OCI-LY7 (cell line): ENCODE measurements at regions of chr1 and their contacts with region 1.

Region 1: DNA sequence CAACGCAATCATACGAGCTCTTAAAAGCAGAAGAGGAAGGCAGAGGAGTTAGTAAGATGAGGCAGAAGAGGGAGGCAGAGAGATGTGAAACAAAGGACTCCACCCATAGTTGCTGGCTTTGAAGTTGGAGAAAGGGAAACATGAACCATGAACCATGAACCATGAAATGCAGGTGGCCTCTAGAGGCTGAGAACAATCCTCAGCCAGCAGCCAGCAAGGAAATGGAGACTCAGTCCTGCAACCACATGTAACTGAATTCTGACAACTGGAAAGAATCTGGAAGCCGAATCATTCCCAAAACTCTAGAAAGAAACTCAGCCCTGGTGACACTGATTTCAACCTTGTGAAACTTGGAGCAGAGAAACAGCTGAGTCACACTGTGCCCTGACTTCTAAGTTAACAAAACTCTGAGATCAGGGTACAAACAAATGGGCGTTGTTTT is 10.1 kb downstream of the DIPK1A start:
- DNase-seq: peak; percentile 94
- H3K4me3 ChIP-seq: peak overlapping the region; percentile 55
- H3K27ac ChIP-seq: peak overlapping the region; percentile 92
- H3K4me1 ChIP-seq: peaks cover 93% of the 10 kb centered on the region
- CTCF ChIP-seq: peak; percentile 72

Region 2: DNA sequence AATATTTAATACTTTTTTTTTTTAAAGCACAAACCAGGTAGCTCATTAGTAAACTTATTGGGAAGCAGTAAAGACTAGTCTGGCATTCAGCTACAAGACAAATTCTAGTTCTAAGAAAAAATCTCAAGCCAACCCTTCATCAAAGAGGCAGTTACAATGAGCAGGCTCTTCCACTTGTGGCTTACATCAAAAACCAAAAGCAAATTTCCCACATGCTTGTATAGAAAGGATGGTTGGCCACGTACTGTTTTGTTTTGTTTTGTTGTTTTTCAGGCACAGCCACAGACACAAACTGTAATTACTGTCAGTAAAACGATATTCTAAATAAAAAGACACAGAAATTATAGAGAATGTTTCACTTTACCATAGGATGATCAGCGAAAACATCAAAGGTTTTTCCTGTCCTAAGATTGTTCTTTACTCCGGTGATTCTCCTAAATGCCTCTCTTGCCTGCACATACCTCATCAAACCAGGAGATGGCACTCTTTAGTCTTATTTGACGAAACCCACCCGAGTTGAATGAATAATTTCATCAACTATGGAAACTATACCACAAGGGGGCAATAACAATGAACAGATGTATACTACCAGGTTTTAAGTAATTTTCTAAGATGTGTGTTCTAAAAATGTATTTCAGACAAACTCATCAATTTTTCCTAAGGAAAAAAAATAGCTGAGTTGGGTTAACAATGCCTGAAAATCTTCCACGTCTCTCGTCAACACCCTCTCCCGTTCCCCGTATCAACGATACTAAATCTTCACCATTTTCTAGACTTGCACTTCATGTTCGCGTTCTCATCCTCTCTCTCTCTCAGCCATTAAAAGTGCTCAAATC is 92.4 kb before region 1 on chr1:
- CTCF ChIA-PET with region 1: interaction called, 3 read pairs
- POLR2A ChIA-PET with region 1: interaction called, 38 read pairs
- intact Hi-C with region 1: loop called (anchors 2 kb)
- DNase-seq: peak; percentile 91
- H3K4me3 ChIP-seq: peak overlapping the region; percentile 56
- H3K27ac ChIP-seq: peak overlapping the region; percentile 65
- H3K4me1 ChIP-seq: peaks cover 28% of the 10 kb centered on the region
- CTCF ChIP-seq: peak; percentile 100

Region 3: DNA sequence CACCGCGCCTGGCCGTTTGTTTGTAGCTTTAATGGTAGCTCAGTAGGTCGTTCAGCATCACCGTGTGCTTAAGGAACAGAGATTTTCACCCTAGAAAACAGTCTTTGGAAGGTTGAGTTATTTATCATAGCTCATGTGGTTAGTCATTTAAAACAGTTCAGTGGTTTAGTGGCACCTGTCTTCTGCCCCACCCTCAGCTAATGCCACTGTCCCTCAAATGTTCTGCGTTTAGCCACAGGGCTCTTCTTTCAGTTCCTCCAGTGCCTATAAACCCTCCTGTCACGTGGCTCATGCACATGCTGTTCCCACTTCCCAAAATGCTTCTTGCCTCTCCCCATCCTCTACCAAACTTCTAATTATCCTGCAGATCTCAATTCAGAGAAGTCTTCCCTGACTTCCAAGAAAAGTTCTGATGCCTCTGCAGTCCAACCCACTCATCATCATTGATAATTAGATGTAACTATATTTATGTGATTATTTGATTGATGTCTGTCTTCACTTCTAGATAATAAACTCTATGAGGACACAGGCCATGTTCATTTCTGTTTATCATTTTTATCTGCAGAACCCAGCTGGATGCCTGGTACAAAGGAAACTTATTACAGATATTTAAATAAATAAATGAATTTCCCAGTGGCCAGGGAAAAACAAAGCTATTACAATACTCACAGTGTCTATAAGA is 24.5 kb after region 1 on chr1:
- CTCF ChIA-PET with region 1: interaction called, 3 read pairs
- POLR2A ChIA-PET with region 1: interaction called, 98 read pairs
- intact Hi-C with region 1: no loop called
- DNase-seq: peak; percentile 92
- H3K4me3 ChIP-seq: peak overlapping the region; percentile 44
- H3K27ac ChIP-seq: peak overlapping the region; percentile 96
- H3K4me1 ChIP-seq: peaks cover 99% of the 10 kb centered on the region
- CTCF ChIP-seq: no peak

Region 4: DNA sequence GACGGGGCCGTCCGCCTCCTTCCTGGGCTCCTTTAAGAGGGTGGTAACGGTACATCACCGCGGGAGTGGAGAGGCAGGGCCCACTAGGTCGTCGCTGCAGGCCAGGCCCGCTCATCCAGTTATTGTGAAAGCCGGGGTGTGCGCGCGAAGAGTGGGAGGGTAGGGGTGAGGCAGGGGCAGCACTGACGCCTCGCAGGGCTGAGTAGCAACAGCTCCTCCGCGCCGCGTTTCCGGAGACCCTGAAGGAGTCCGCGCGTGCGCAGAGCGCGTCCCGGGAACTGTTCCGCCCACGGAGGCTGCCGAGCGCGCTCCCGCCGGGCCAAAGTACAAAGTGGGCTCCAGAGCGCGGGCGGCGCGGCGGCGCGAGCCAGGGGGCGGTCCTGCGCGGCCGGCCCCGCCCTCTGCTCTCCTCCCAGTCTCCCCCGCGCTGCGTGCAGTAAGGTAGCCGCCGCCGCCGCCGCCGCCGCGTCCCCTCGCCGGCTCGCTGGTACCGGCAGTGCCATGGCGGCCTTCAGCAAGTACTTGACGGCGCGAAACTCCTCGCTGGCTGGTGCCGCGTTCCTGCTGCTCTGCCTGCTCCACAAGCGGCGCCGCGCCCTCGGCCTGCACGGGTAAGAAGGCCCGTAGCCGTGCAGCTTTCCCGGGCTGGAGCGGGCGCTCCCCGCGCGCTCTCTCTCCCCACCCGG is 1467.0 kb after region 1 on chr1 and contains the start of gene ABCD3:
- CTCF ChIA-PET with region 1: no interaction called
- POLR2A ChIA-PET with region 1: no interaction called
- intact Hi-C with region 1: loop called (anchors 10 kb)
- DNase-seq: peak; percentile 97
- H3K4me3 ChIP-seq: peak within 1 kb of the TSS; percentile 91
- H3K27ac ChIP-seq: peak within 1 kb of the TSS; percentile 35
- H3K4me1 ChIP-seq: peaks cover 30% of the 10 kb centered on the region
- CTCF ChIP-seq: no peak
- total RNA-seq, gene ABCD3: 18.3 and 21.1 TPM in 2 replicates